ENCODE measurements at regions of chr3 and their contacts with region 1.

Region 1: DNA sequence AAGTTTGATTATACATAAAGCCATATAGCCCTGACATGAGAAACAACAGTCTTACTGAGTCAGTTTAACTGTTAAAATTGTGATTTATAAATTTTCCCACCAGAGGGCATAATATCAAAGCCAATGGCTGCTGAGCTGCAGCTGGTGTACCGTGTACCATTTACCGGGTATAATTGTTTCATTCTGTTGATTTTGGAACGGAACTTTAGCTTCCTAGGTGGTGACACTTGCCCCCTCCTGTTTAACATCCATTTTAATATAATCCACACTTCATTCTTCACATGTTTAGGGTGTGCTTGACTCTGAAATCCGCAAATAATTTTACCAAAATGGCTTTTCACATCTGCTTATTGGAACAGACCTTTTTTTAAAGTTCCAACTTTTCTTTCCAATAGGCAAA is 72.8 kb downstream of the SLC9A9 start:
- DNase-seq: no peak
- H3K4me3 ChIP-seq: no peak overlapping the region
- H3K27ac ChIP-seq: no peak overlapping the region
- H3K27me3 ChIP-seq: no peaks in the 10 kb centered on the region
- CTCF ChIP-seq: peak; percentile 66

Region 2: DNA sequence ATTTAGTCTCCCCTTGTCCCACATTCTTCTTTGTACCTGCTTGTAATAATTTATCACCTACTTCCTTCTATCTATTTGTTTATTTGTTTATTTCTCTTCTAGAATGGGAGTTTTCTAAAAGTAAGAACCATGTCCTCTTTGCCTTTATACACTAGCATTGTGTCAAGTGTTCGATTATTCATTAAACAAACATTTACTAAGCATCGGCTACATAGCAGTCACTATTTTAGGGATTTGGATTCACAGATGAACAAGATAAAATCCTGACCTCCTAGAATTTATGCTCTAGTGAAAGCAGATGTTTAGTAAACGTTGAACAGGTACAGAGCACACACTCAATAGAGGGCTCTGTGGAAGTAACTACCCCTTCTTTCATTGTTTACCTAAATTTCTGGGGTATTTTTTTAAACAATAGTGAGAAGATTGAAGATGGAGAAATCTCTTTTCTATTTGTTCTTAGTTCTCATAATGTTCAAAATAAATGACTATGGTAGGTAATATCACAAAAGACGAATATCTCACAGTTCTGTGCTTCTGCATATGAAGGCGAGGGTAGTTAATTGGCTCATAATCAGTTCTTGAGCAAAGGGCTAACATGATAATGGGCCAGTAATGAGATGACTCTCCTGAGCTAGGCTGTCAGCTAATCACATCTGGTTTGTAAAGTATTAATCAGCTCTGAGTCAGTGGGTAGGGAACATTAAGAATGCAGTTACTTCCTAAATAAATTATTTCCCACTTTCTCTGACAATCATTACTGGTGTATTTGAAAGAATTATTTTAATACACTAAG is 39.1 kb before region 1 on chr3:
- CTCF ChIA-PET with region 1: no interaction called
- POLR2A ChIA-PET with region 1: no interaction called
- DNase-seq: no peak
- H3K4me3 ChIP-seq: no peak overlapping the region
- H3K27ac ChIP-seq: no peak overlapping the region
- H3K27me3 ChIP-seq: no peaks in the 10 kb centered on the region
- CTCF ChIP-seq: no peak

Region 3: GRCh38 chr3:143885780-143886427 is 110.4 kb after region 1 on chr3:
- CTCF ChIA-PET with region 1: interaction called, 10 read pairs
- POLR2A ChIA-PET with region 1: no interaction called
- DNase-seq: no peak
- H3K4me3 ChIP-seq: no peak overlapping the region
- H3K27ac ChIP-seq: no peak overlapping the region
- H3K27me3 ChIP-seq: no peaks in the 10 kb centered on the region
- CTCF ChIP-seq: peak; percentile 82